Activated CD4-positive, alpha-beta memory T cell treated with anti-CD3 and anti-CD28 coated beads for 36 hours (primary cell): ENCODE measurements at regions of chr15 and their contacts with region 1.

Region 1: DNA sequence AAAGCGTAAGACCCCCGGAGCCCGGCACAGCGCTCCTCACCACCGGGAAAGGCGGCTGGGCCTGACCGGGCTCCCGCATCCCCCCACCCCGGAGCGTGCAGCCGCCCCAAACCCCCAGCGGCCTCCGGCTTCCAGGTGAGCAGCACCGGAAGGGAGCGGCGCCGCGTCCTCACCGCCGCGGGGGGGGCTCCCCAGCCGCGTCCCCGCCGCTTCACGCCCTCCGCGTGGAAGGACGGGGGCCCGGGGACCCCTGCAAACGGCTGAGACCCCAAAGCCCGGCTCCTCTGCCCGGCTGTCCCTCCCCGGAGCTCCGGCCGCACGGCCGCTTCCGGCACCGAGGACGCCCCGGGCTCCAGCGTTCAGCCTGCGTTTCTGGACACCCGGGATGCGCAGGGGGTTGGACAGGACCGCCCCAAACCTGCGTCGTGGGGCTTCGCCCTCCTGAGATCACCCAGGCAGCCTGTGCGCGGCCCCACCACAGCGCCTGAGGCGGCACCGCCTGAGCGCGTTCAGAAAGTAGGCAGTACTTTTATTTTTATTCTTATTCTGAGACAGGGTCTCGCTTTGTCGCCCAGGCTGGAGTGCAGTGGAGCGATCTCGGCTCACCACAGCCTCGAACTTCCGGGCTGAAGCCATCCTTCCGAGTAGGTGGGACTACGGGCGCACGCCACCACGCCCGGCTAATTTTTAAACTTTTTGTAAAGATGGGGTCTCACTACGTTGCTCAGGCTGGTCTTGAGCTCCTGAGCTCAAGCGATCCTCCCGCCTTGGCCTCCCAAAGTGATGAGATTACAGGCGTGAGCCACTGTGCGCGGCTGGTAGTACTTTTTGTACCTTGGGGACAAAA is 51.6 kb upstream of the BLM start:
- DNase-seq: peak; percentile 67
- H3K4me3 Mint-ChIP-seq: peak overlapping the region; percentile 75
- H3K27ac Mint-ChIP-seq: no peak overlapping the region
- H3K4me1 Mint-ChIP-seq: peaks cover 33% of the 10 kb centered on the region
- H3K27me3 Mint-ChIP-seq: peaks cover 34% of the 10 kb centered on the region

Region 2: GRCh38 chr15:90677807-90678790 is 12.6 kb after region 1 on chr15:
- CTCF ChIA-PET with region 1: no interaction called
- POLR2A ChIA-PET with region 1: interaction called, 3 read pairs
- intact Hi-C with region 1: loop called (anchors 1 kb)
- DNase-seq: peak; percentile 25
- H3K4me3 Mint-ChIP-seq: peak overlapping the region; percentile 43
- H3K27ac Mint-ChIP-seq: peak overlapping the region; percentile 82
- H3K4me1 Mint-ChIP-seq: peaks cover 31% of the 10 kb centered on the region
- H3K27me3 Mint-ChIP-seq: no peaks in the 10 kb centered on the region